CD8-positive, alpha-beta T cell (primary cell): ENCODE measurements at regions of chr3 and their contacts with region 1.

Region 1: DNA sequence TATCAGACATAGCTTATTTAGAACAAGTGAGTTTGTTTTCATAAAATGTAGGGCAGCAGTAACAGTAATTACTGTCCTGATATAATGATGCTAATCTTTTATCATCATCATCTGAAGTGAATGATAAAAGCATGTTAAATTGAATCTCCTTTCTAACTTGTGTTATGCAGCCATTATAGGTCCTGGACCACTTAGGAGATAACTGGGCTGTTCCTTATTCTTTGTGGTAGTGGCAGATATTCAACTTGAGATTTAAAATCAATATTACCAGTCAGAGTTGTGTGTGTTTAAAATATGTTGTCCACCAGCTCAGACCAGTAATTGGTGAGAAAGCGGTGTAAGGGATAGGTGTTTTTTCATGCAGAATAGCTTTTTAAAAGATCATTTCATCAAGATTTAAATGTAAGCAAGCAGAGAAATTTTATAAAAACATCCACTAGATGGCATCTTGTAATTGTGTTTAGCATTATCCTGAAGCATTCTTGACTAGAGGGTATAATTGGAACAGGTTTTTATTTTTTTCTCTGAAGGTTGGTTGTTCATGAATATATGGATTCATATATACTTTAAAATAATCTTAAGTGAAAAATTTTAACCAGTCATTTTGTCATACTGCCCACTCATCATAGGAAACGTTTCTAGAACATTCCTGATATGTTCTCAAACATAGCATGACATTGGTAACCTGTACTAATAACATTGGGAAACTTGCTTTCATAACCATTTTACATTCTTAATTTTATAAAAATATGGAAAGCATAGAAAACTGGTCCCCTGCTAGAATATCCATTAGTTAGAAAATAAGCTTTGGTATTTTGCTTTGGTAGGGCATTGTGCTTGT is 153.9 kb downstream of the BBX start:
- DNase-seq: peak in 2 of 9 experiments; percentile 24 to 49
- ATAC-seq: peak; percentile 54
- H3K4me3 ChIP-seq: no peak overlapping the region
- H3K4me3 Mint-ChIP-seq: no peak overlapping the region
- H3K27ac ChIP-seq: no peak overlapping the region
- H3K27ac Mint-ChIP-seq: peak overlapping the region; percentile 58
- H3K4me1 ChIP-seq: no peaks in the 10 kb centered on the region
- H3K4me1 Mint-ChIP-seq: peaks cover 41% of the 10 kb centered on the region
- H3K27me3 ChIP-seq: no peaks in the 10 kb centered on the region
- H3K27me3 Mint-ChIP-seq: no peaks in the 10 kb centered on the region
- CTCF ChIP-seq: peak; percentile 74

Region 2: DNA sequence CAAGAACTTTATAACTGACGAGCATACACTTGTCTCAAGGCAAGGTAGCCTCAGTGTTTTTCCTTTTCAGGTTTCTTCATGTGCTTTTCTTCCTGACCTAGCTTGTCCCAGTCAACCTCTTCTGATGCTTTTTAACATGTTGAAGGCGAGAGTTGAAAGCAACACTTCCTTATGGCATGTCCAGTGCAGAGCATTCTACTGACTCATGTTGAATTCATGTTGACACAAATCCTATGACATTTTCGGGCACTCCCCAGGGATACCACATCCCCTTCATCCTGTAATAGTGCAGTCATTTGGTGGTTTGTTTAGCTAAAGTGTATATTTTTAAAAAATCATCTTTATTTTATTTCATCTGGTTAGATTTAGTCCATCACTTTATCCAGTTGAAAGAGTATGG is 1732.0 kb before region 1 on chr3:
- CTCF ChIA-PET with region 1: no interaction called
- POLR2A ChIA-PET with region 1: no interaction called
- intact Hi-C with region 1: no loop called
- DNase-seq: no peak
- ATAC-seq: no peak
- H3K4me3 ChIP-seq: no peak overlapping the region
- H3K4me3 Mint-ChIP-seq: no peak overlapping the region
- H3K27ac ChIP-seq: no peak overlapping the region
- H3K27ac Mint-ChIP-seq: no peak overlapping the region
- H3K4me1 ChIP-seq: no peaks in the 10 kb centered on the region
- H3K4me1 Mint-ChIP-seq: no peaks in the 10 kb centered on the region
- H3K27me3 ChIP-seq: no peaks in the 10 kb centered on the region
- H3K27me3 Mint-ChIP-seq: no peaks in the 10 kb centered on the region
- CTCF ChIP-seq: no peak

Region 3: DNA sequence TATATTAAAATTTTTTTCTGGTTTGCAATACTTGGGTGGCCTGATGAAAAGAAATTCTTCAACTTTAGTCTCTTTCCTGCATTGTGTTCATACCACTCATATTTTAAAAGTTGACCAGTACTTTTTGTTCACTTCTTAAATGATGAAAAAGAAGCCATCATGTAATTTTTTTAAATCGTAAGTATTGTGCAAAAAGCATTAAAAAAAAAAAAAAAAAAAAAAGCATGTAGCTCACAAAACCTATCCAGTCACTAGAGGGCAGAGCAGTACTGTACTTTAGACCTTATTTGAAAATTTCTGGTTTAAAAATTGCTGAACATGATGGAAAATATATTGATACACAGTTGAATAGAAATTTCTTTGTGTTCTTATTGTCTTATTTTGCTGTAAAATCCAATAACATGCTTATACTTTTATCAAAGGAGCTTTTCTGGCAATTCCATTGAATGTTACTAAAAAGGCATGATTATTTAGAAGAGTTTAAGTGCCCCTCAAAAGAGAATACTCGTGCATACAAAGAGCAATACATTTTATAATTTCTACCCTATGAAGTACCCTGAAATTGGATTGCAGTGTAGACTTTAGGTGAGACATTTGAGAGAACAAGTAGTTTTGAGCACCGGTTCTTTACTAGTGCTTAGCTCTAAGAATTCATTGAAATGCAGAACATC is 16.2 kb before region 1 on chr3:
- CTCF ChIA-PET with region 1: interaction called, 27 read pairs
- POLR2A ChIA-PET with region 1: interaction called, 3 read pairs
- intact Hi-C with region 1: no loop called
- DNase-seq: peak in 2 of 9 experiments; percentile 52 to 61
- ATAC-seq: no peak
- H3K4me3 ChIP-seq: no peak overlapping the region
- H3K4me3 Mint-ChIP-seq: no peak overlapping the region
- H3K27ac ChIP-seq: no peak overlapping the region
- H3K27ac Mint-ChIP-seq: no peak overlapping the region
- H3K4me1 ChIP-seq: peaks cover 17% of the 10 kb centered on the region
- H3K4me1 Mint-ChIP-seq: peaks cover 31% of the 10 kb centered on the region
- H3K27me3 ChIP-seq: no peaks in the 10 kb centered on the region
- H3K27me3 Mint-ChIP-seq: no peaks in the 10 kb centered on the region
- CTCF ChIP-seq: peak; percentile 73

Region 4: GRCh38 chr3:107740992-107741896 is 64.6 kb after region 1 on chr3:
- CTCF ChIA-PET with region 1: interaction called, 82 read pairs
- POLR2A ChIA-PET with region 1: no interaction called
- intact Hi-C with region 1: loop called (anchors 1 kb)
- DNase-seq: peak in 2 of 9 experiments; percentile 24 to 45
- ATAC-seq: no peak
- H3K4me3 ChIP-seq: no peak overlapping the region
- H3K4me3 Mint-ChIP-seq: no peak overlapping the region
- H3K27ac ChIP-seq: no peak overlapping the region
- H3K27ac Mint-ChIP-seq: peak overlapping the region; percentile 20
- H3K4me1 ChIP-seq: no peaks in the 10 kb centered on the region
- H3K4me1 Mint-ChIP-seq: no peaks in the 10 kb centered on the region
- H3K27me3 ChIP-seq: no peaks in the 10 kb centered on the region
- H3K27me3 Mint-ChIP-seq: no peaks in the 10 kb centered on the region
- CTCF ChIP-seq: peak; percentile 74

Region 5: GRCh38 chr3:107846279-107846852 is 169.7 kb after region 1 on chr3:
- CTCF ChIA-PET with region 1: interaction called, 22 read pairs
- POLR2A ChIA-PET with region 1: no interaction called
- intact Hi-C with region 1: loop called in 1 of 2 experiments (anchors 5 kb)
- DNase-seq: peak in 4 of 9 experiments; percentile 18 to 48 (median 38)
- ATAC-seq: no peak
- H3K4me3 ChIP-seq: no peak overlapping the region
- H3K4me3 Mint-ChIP-seq: no peak overlapping the region
- H3K27ac ChIP-seq: no peak overlapping the region
- H3K27ac Mint-ChIP-seq: no peak overlapping the region
- H3K4me1 ChIP-seq: no peaks in the 10 kb centered on the region
- H3K4me1 Mint-ChIP-seq: no peaks in the 10 kb centered on the region
- H3K27me3 ChIP-seq: no peaks in the 10 kb centered on the region
- H3K27me3 Mint-ChIP-seq: peaks cover 6% of the 10 kb centered on the region
- CTCF ChIP-seq: no peak

Region 6: GRCh38 chr3:108552267-108553159 is 875.8 kb after region 1 on chr3:
- CTCF ChIA-PET with region 1: no interaction called
- POLR2A ChIA-PET with region 1: no interaction called
- intact Hi-C with region 1: loop called in 1 of 2 experiments (anchors 10 kb)
- DNase-seq: peak in 2 of 9 experiments; percentile 59 to 65
- ATAC-seq: peak; percentile 52
- H3K4me3 ChIP-seq: no peak overlapping the region
- H3K4me3 Mint-ChIP-seq: no peak overlapping the region
- H3K27ac ChIP-seq: no peak overlapping the region
- H3K27ac Mint-ChIP-seq: no peak overlapping the region
- H3K4me1 ChIP-seq: no peaks in the 10 kb centered on the region
- H3K4me1 Mint-ChIP-seq: peaks cover 2% of the 10 kb centered on the region
- H3K27me3 ChIP-seq: no peaks in the 10 kb centered on the region
- H3K27me3 Mint-ChIP-seq: no peaks in the 10 kb centered on the region
- CTCF ChIP-seq: peak; percentile 58